ENCODE measurements at regions of chr18 and their contacts with region 1.

Region 1: GRCh38 chr18:62584241-62585120 is 61.7 kb downstream of the ZCCHC2 start:
- DNase-seq: peak; percentile 90
- ATAC-seq: peak; percentile 93

Region 2: GRCh38 chr18:62425465-62426195 is 158.9 kb before region 1 on chr18:
- intact Hi-C with region 1: loop called (anchors 5 kb)
- DNase-seq: peak; percentile 80
- ATAC-seq: peak; percentile 96

Region 3: GRCh38 chr18:62982600-62983251 is 398.2 kb after region 1 on chr18:
- intact Hi-C with region 1: loop called (anchors 5 kb)
- DNase-seq: peak; percentile 77
- ATAC-seq: peak; percentile 77

Measured in sciatic nerve (tissue), 2 donors.